ENCODE measurements at regions of chrX and their contacts with region 1.

Region 1: GRCh38 chrX:103686199-103687072 is at the start of gene MORF4L2:
- DNase-seq: peak; percentile 78 to 94
- ATAC-seq: peak; percentile 88 to 96 (median 92)
- H3K4me3 ChIP-seq: peak within 1 kb of the TSS; percentile 44 to 77 (median 65)
- H3K27ac ChIP-seq: peak within 1 kb of the TSS; percentile 76 to 99 (median 95)
- H3K4me1 ChIP-seq: peaks cover 0 to 43% (median 14%) of the 10 kb centered on the region in 9 donors
- H3K27me3 ChIP-seq: peaks cover 0 to 20% (median 0%) of the 10 kb centered on the region in 7 donors
- CTCF ChIP-seq: no peak
- total RNA-seq, gene MORF4L2: 149 to 244 (median 191) TPM

Region 2: DNA sequence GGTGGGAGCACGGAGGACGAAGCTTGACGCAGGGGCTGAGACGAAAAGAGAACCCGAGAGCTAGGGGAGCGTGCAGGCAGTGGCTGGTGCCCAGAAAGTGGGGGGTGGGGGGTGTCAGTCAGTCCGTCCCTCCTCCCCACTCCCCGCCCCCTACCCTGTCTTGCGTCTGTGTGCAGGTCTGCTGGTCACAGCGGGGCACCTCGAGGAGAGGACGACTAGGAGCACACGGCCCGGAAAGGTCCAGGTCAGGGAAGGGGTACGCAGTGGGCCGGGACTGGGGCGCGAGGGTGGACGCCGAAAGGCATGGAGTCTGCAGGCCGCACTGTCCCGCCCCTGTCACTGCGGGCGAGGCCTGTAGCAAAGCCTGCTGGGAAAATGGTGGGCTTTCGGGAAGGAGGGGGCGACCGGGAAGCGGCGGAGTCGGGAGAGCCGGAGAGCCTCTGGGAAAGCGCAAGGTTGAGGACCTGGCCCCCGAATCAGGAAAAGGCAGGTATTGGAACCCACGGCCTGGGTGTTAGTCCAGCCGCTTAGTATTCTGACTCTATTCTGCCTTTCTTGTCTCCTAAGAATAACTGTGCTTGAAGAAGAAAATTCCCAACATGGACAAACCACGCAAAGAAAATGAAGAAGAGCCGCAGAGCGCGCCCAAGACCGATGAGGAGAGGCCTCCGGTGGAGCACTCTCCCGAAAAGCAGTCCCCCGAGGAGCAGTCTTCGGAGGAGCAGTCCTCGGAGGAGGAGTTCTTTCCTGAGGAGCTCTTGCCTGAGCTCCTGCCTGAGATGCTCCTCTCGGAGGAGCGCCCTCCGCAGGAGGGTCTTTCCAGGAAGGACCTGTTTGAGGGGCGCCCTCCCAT is 56.9 kb before region 1 on chrX:
- intact Hi-C with region 1: loop called in 3 of 10 experiments (anchors 5 to 10 kb)
- DNase-seq: peak; percentile 65 to 67
- ATAC-seq: peak; percentile 90 to 97 (median 96)
- H3K4me3 ChIP-seq: peak overlapping the region; percentile 61 to 79 (median 72)
- H3K27ac ChIP-seq: peak overlapping the region; percentile 69 to 95 (median 92)
- H3K4me1 ChIP-seq: peaks cover 0 to 23% (median 7%) of the 10 kb centered on the region in 9 donors
- H3K27me3 ChIP-seq: peaks cover 0 to 25% (median 0%) of the 10 kb centered on the region in 7 donors
- CTCF ChIP-seq: peak in 8 of 9 donors; percentile 11 to 70 (median 48)

Region 3: GRCh38 chrX:103774070-103774642 is 87.7 kb after region 1 on chrX:
- intact Hi-C with region 1: loop called in 2 of 10 experiments (anchors 5 to 10 kb)
- DNase-seq: no peak
- ATAC-seq: peak in 3 of 8 donors; percentile 56 to 61 (median 59)
- H3K4me3 ChIP-seq: no peak overlapping the region
- H3K27ac ChIP-seq: no peak overlapping the region
- H3K4me1 ChIP-seq: no peaks in the 10 kb centered on the region
- H3K27me3 ChIP-seq: peaks cover 0 to 11% (median 0%) of the 10 kb centered on the region in 7 donors
- CTCF ChIP-seq: peak in 7 of 9 donors; percentile 29 to 49 (median 43)

Region 4: DNA sequence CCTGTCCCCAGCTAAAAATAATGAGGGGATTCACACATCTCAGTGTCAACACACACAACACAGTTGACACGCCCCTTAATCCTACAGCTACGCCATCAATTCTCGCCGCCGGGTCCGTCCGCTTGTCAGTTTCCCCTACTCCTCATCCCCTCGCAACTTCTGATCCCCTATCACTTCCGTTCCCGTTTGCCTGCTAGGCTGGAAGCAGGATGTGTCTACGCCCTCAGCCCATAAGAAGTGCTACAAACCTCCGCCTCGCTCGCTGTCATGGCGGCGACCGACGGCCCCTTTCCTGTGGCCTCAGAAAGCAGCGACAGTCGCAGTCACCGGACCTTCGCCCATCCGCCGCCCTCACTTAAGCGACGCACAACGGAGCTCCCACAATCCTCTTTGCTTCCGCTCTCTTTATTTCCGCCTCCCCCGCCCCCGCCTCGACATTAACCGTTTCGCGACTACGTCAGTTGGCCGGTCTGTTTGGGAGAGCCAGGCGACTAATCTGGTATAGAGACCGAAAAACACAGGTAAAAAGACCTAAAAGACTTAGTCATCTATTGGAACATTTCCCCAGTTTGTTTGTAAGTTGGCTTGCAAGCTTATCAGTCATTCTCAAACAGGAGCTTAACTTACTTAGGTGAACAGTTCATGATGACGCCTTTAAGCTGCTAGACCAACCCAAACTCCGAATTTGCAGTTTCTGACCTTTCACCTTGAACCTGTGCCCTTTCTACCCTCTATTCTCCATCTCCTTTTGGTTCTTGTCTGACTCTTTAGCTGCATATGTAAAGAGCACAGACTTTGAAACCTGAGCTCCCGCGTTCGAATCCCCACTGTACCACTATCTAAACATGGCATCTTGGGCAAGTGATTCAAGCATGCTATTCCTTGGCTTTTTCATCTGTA is 470.4 kb after region 1 on chrX and contains the start of gene SLC25A53:
- intact Hi-C with region 1: loop called in 1 of 10 experiments (anchors 5 kb)
- DNase-seq: peak; percentile 71 to 83
- ATAC-seq: peak; percentile 92 to 99 (median 98)
- H3K4me3 ChIP-seq: peak within 1 kb of the TSS; percentile 38 to 72 (median 65)
- H3K27ac ChIP-seq: peak within 1 kb of the TSS; percentile 79 to 94 (median 90)
- H3K4me1 ChIP-seq: peaks cover 0 to 32% (median 7%) of the 10 kb centered on the region in 9 donors
- H3K27me3 ChIP-seq: peaks cover 0 to 23% (median 0%) of the 10 kb centered on the region in 7 donors
- CTCF ChIP-seq: no peak
- total RNA-seq, gene SLC25A53: 10.8 to 15.6 (median 11.6) TPM

Region 5: GRCh38 chrX:104498291-104498690 is 811.9 kb after region 1 on chrX:
- intact Hi-C with region 1: no loop called
- DNase-seq: no peak
- ATAC-seq: no peak
- H3K4me3 ChIP-seq: no peak overlapping the region
- H3K27ac ChIP-seq: no peak overlapping the region
- H3K4me1 ChIP-seq: no peaks in the 10 kb centered on the region
- H3K27me3 ChIP-seq: peaks cover 0 to 14% (median 0%) of the 10 kb centered on the region in 7 donors
- CTCF ChIP-seq: no peak